ENCODE measurements at regions of chr3 and their contacts with region 1.

Region 1: GRCh38 chr3:118102737-118103136 is 931.9 kb downstream of the IGSF11 start:
- DNase-seq: no peak
- H3K4me3 ChIP-seq: no peak overlapping the region
- CTCF ChIP-seq: no peak
- POLR2A ChIP-seq: no peak

Region 2: DNA sequence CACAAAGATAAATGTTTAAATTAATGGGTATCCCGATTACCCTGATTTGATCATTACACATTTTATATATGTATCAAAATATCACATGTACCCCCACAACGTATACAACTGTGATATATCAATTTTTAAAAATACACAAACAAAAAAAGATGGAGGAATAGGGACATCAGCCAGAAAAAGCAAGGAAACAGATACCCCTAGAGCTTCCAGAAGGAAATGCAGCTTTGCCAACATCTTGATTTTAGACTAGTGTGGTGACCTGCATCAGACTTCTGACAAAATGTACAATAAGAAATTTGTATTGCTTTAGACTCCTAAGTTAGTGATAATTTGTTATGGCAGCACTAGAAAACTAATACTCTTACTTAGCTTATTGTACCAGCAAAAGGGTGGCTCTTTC is 909.3 kb before region 1 on chr3:
- intact Hi-C with region 1: loop called (anchors 5 kb)
- DNase-seq: no peak
- H3K4me3 ChIP-seq: no peak overlapping the region
- CTCF ChIP-seq: no peak
- POLR2A ChIP-seq: no peak

Region 3: GRCh38 chr3:118144919-118145318 is 42.2 kb after region 1 on chr3:
- intact Hi-C with region 1: no loop called
- DNase-seq: no peak
- H3K4me3 ChIP-seq: no peak overlapping the region
- CTCF ChIP-seq: no peak
- POLR2A ChIP-seq: no peak

Measured in lower leg skin (tissue), 4 donors.